Motor neuron (in vitro differentiated cells): ENCODE measurements at regions of chr13 and their contacts with region 1.

Region 1: GRCh38 chr13:51286135-51287002 is 53.1 kb upstream of the SERPINE3 start:
- ATAC-seq: peak; percentile 82 to 95 (median 90)
- H3K4me3 ChIP-seq: no peak overlapping the region
- H3K27ac ChIP-seq: no peak overlapping the region
- H3K4me1 ChIP-seq: no peaks in the 10 kb centered on the region

Region 2: DNA sequence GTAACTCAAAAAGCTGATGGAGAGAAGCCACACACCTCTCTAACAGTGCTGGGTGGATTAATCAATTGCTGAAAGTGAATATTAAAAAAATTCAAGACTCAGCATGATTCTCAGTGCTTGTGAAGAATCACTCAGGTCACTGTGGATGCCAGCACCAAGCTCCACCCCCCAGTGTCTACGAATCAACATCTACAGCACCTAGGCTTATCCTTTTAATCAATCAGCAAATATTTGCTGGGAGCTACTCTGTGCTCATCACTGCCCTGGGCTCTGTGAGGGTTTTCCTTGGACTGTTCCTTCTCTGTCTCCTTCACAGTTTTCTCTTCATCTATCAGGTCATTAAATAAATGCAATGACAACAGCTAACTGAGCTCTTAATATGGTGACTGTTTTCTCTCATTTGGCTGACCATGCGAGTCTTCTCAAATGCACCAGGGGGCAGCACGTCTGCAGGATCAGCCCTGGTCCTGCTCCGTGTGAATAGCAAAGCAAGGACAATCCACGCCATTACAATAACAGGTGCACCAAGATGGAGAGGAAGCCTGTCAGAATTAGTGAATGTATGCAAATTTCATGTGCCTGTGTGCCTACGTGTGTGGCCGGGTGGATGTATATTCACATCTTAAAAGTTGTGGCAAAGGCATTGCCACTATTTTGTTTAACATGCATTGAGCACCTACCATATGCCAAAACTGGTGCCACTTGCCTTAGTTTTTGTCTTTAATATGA is 160.7 kb before region 1 on chr13:
- in situ Hi-C with region 1: loop called in 1 of 9 experiments (anchors 25 kb)
- ATAC-seq: peak; percentile 58 to 95 (median 84)
- H3K4me3 ChIP-seq: no peak overlapping the region
- H3K27ac ChIP-seq: no peak overlapping the region
- H3K4me1 ChIP-seq: peaks cover 5 to 10% of the 10 kb centered on the region in 2 donors

Region 3: GRCh38 chr13:51148952-51149573 is 137.3 kb before region 1 on chr13:
- in situ Hi-C with region 1: loop called in 6 of 9 experiments (anchors 10 to 25 kb)
- ATAC-seq: peak; percentile 75 to 92 (median 85)
- H3K4me3 ChIP-seq: no peak overlapping the region
- H3K27ac ChIP-seq: no peak overlapping the region
- H3K4me1 ChIP-seq: peaks cover 0 to 9% of the 10 kb centered on the region in 2 donors

Region 4: GRCh38 chr13:51154029-51154555 is 132.3 kb before region 1 on chr13:
- in situ Hi-C with region 1: loop called in 6 of 9 experiments (anchors 10 to 25 kb)
- ATAC-seq: peak in 4 of 8 experiments; percentile 44 to 81 (median 56)
- H3K4me3 ChIP-seq: no peak overlapping the region
- H3K27ac ChIP-seq: no peak overlapping the region
- H3K4me1 ChIP-seq: peaks cover 10 to 21% of the 10 kb centered on the region in 2 donors